Breast epithelium (tissue), 4 donors: ENCODE measurements at regions of chr1 and their contacts with region 1.

Region 1: GRCh38 chr1:23344111-23344986 is at the start of gene HNRNPR:
- DNase-seq: peak; percentile 99 to 100
- H3K4me3 ChIP-seq: peak within 1 kb of the TSS; percentile 90 to 97 (median 96)
- H3K27ac ChIP-seq: peak within 1 kb of the TSS; percentile 99
- H3K4me1 ChIP-seq: peaks cover 0 to 15% of the 10 kb centered on the region in 2 donors
- H3K27me3 ChIP-seq: no peaks in the 10 kb centered on the region
- CTCF ChIP-seq: peak in 2 of 3 donors; percentile 6 to 14
- POLR2A ChIP-seq: peak; percentile 63
- total RNA-seq, gene HNRNPR: 56.6 to 114 (median 109) TPM

Region 2: DNA sequence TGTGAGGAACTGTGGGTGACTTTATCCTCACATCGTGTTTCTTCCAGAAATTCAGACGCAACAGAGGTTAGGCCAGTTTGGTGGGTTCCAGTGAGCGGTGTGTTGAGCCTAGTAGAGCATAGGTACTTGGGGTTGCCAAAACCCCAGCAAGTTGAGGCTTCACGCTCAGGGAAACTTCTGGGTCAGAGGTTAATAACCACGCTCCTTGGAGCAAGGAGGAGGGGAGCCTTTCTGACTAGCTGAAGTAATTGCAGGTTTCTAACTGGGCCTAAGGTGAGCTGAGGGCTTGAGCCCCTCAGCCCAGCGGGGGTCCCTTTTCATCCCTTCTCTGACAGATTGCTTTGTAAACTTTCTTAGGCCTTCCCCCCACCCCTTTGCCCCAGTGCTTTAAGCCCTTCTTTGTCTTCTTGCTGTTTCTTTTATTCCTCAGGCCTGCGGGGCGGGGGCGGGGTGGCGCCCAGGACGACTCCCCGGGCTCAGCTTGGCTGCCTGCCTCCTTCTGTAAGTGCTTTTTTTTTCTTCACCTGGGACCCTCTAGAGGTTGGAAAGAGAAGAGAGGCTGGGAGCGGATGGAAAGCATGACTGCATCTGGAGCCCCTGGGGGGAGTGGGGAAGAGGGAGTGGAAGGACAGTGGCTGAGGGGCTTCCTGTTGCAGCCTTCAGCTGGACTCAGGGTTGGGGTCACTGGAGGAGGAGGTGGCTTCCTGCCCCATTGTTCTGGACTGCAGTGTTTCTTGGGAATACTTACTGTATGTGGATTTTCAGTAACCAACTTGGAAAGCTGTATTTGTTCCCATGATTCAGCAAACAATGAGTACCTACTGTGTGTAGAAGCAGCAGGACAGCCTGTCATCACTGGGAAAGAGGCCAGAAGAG is 26.6 kb after region 1 on chr1:
- intact Hi-C with region 1: loop called (anchors 1 kb)
- DNase-seq: no peak
- H3K4me3 ChIP-seq: peak overlapping the region in 2 of 3 donors; percentile 79 to 90
- H3K27ac ChIP-seq: peak overlapping the region; percentile 89 to 96
- H3K4me1 ChIP-seq: peaks cover 10 to 29% of the 10 kb centered on the region in 2 donors
- H3K27me3 ChIP-seq: no peaks in the 10 kb centered on the region
- CTCF ChIP-seq: no peak
- POLR2A ChIP-seq: no peak

Region 3: GRCh38 chr1:23403735-23404486 is 59.6 kb after region 1 on chr1:
- intact Hi-C with region 1: loop called (anchors 10 kb)
- DNase-seq: peak; percentile 90 to 92
- H3K4me3 ChIP-seq: peak overlapping the region in 2 of 3 donors; percentile 9 to 41
- H3K27ac ChIP-seq: peak overlapping the region; percentile 63 to 65
- H3K4me1 ChIP-seq: peaks cover 0 to 22% of the 10 kb centered on the region in 2 donors
- H3K27me3 ChIP-seq: no peaks in the 10 kb centered on the region
- CTCF ChIP-seq: peak; percentile 93 to 96 (median 94)
- POLR2A ChIP-seq: no peak

Region 4: GRCh38 chr1:23598424-23598823 is 254.1 kb after region 1 on chr1:
- intact Hi-C with region 1: no loop called
- DNase-seq: no peak
- H3K4me3 ChIP-seq: no peak overlapping the region
- H3K27ac ChIP-seq: no peak overlapping the region
- H3K4me1 ChIP-seq: no peaks in the 10 kb centered on the region
- H3K27me3 ChIP-seq: no peaks in the 10 kb centered on the region
- CTCF ChIP-seq: no peak
- POLR2A ChIP-seq: no peak